AG04449 (cell line): ENCODE measurements at regions of chr1 and their contacts with region 1.

Region 1: GRCh38 chr1:42936309-42937078 is 22.2 kb downstream of the SLC2A1 start:
- DNase-seq: no peak
- H3K4me3 ChIP-seq: no peak overlapping the region
- CTCF ChIP-seq: no peak

Region 2: GRCh38 chr1:42924082-42924850 is 12.2 kb before region 1 on chr1:
- CTCF ChIA-PET with region 1: interaction called, 67 read pairs
- POLR2A ChIA-PET with region 1: interaction called, 5 read pairs
- DNase-seq: peak; percentile 24
- H3K4me3 ChIP-seq: peak overlapping the region; percentile 66
- CTCF ChIP-seq: peak; percentile 7

Region 3: GRCh38 chr1:42952303-42953001 is 16.0 kb after region 1 on chr1:
- CTCF ChIA-PET with region 1: interaction called, 5 read pairs
- POLR2A ChIA-PET with region 1: interaction called, 14 read pairs
- DNase-seq: no peak
- H3K4me3 ChIP-seq: no peak overlapping the region
- CTCF ChIP-seq: no peak